Endothelial cell of umbilical vein (primary cell): ENCODE measurements at regions of chr9 and their contacts with region 1.

Region 1: GRCh38 chr9:77177161-77177893 is at the start of gene VPS13A:
- DNase-seq: peak; percentile 91
- H3K4me3 ChIP-seq: peak within 1 kb of the TSS; percentile 86 to 91 (median 87)
- H3K27ac ChIP-seq: peak within 1 kb of the TSS; percentile 44
- H3K4me1 ChIP-seq: peaks cover 12% of the 10 kb centered on the region
- H3K27me3 ChIP-seq: peaks cover 3% of the 10 kb centered on the region in 2 experiments
- CTCF ChIP-seq: peak; percentile 18 to 50
- POLR2A ChIP-seq: peak; percentile 40
- total RNA-seq, gene VPS13A: 29.8 and 33.3 TPM in 2 replicates

Region 2: DNA sequence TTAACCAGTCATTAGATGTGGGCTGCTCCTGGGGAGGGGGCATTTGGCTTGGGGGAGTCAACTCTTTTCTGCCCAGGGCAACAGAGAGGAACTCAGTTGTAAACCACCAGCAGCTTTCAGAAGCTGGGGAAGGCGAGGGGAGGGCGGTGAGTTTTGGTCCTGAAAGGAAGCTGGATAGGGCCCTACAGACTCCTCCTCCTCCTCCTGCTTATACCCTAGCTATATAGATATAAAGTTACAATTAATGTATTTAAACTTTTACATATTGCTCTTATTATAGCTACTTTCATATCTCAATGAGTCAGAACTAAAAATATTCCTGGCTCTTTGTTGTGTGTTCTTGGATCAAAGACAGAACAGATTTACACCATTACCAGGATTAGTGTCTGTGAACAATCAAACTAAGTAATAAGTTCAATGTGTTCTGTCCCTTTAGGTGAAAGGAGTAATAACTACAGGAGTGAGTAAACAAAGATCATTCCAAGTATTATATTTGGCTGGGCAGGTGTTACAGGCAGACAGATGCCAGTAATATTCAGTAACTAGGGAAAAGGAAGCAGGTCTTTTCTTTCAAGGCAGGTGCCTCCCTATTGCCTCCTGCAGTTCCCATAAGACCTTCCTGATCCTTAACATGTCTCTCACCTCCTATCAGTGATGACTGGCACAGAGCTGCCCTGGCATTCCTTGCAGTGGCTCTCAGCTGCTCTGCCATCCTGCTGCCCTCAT is 20.5 kb before region 1 on chr9:
- CTCF ChIA-PET with region 1: interaction called, 12 read pairs
- POLR2A ChIA-PET with region 1: no interaction called
- dilution Hi-C with region 1: no loop called
- intact Hi-C with region 1: no loop called
- DNase-seq: peak; percentile 30
- H3K4me3 ChIP-seq: no peak overlapping the region
- H3K27ac ChIP-seq: no peak overlapping the region
- H3K4me1 ChIP-seq: peaks cover 25% of the 10 kb centered on the region
- H3K27me3 ChIP-seq: peaks cover under 1 to 5% of the 10 kb centered on the region in 2 experiments
- CTCF ChIP-seq: no peak
- POLR2A ChIP-seq: no peak

Region 3: DNA sequence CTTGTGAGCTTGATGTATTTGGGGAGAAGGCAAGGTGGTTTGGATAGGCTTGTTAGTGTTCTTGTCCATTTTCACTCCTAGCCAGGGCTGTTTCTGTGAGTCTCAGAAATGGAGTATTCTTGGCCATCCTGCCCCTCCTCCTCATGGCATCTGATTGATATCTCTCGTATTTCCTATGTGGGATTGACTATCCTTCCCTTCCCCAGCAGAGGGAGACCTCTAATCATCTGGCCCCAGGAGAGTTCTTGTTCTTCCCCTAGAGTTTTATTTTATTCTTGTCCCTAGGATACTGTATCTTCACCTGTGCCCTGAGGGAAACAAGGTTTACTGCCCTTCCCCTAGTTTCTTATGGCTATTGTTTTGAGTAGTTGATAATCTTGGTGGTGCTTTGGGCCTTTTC is 114.4 kb after region 1 on chr9:
- CTCF ChIA-PET with region 1: interaction called, 3 read pairs
- POLR2A ChIA-PET with region 1: no interaction called
- dilution Hi-C with region 1: no loop called
- intact Hi-C with region 1: loop called (anchors 5 kb)
- DNase-seq: peak; percentile 43
- H3K4me3 ChIP-seq: no peak overlapping the region
- H3K27ac ChIP-seq: no peak overlapping the region
- H3K4me1 ChIP-seq: no peaks in the 10 kb centered on the region
- H3K27me3 ChIP-seq: no peaks in the 10 kb centered on the region
- CTCF ChIP-seq: peak; percentile 47 to 48
- POLR2A ChIP-seq: no peak

Region 4: DNA sequence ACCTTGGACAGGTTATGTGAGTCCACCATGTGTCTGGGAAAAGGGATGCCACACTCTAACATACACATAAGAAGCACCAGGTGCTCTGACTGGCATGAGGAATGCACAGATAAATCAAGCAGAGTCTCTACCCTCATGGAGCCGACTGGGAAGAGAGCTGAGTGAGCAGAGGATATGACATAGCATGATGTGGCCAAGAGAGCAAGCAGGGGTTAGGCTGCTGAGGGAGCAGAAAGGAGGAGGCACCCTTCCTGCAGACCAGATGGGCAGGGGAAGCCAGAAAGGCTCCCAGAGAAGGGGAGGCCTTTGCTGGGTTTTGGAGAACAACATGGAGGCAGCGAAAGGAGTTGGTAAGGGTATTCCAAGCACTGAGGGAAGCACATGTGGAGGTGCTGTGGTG is 247.7 kb after region 1 on chr9:
- CTCF ChIA-PET with region 1: no interaction called
- POLR2A ChIA-PET with region 1: no interaction called
- dilution Hi-C with region 1: no loop called
- intact Hi-C with region 1: loop called (anchors 5 kb)
- DNase-seq: peak; percentile 43
- H3K4me3 ChIP-seq: no peak overlapping the region
- H3K27ac ChIP-seq: peak overlapping the region; percentile 30
- H3K4me1 ChIP-seq: peaks cover 39% of the 10 kb centered on the region
- H3K27me3 ChIP-seq: no peaks in the 10 kb centered on the region
- CTCF ChIP-seq: no peak
- POLR2A ChIP-seq: no peak